Activated CD4-positive, alpha-beta T cell treated with anti-CD3 and anti-CD28 coated beads for 36 hours (primary cell): ENCODE measurements at regions of chr1 and their contacts with region 1.

Region 1: DNA sequence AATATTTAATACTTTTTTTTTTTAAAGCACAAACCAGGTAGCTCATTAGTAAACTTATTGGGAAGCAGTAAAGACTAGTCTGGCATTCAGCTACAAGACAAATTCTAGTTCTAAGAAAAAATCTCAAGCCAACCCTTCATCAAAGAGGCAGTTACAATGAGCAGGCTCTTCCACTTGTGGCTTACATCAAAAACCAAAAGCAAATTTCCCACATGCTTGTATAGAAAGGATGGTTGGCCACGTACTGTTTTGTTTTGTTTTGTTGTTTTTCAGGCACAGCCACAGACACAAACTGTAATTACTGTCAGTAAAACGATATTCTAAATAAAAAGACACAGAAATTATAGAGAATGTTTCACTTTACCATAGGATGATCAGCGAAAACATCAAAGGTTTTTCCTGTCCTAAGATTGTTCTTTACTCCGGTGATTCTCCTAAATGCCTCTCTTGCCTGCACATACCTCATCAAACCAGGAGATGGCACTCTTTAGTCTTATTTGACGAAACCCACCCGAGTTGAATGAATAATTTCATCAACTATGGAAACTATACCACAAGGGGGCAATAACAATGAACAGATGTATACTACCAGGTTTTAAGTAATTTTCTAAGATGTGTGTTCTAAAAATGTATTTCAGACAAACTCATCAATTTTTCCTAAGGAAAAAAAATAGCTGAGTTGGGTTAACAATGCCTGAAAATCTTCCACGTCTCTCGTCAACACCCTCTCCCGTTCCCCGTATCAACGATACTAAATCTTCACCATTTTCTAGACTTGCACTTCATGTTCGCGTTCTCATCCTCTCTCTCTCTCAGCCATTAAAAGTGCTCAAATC is 26.9 kb downstream of the RPL5 start:
- DNase-seq: peak; percentile 58
- ATAC-seq: peak; percentile 86
- H3K4me3 Mint-ChIP-seq: peak overlapping the region; percentile 48
- H3K27ac Mint-ChIP-seq: peak overlapping the region; percentile 48
- H3K4me1 Mint-ChIP-seq: peaks cover 17% of the 10 kb centered on the region
- H3K27me3 Mint-ChIP-seq: no peaks in the 10 kb centered on the region

Region 2: GRCh38 chr1:92877792-92878191 is 19.0 kb after region 1 on chr1:
- CTCF ChIA-PET with region 1: interaction called, 27 read pairs
- POLR2A ChIA-PET with region 1: no interaction called
- intact Hi-C with region 1: no loop called
- DNase-seq: no peak
- ATAC-seq: peak; percentile 60
- H3K4me3 Mint-ChIP-seq: peak overlapping the region; percentile 56
- H3K27ac Mint-ChIP-seq: peak overlapping the region; percentile 83
- H3K4me1 Mint-ChIP-seq: peaks cover 33% of the 10 kb centered on the region
- H3K27me3 Mint-ChIP-seq: no peaks in the 10 kb centered on the region

Region 3: DNA sequence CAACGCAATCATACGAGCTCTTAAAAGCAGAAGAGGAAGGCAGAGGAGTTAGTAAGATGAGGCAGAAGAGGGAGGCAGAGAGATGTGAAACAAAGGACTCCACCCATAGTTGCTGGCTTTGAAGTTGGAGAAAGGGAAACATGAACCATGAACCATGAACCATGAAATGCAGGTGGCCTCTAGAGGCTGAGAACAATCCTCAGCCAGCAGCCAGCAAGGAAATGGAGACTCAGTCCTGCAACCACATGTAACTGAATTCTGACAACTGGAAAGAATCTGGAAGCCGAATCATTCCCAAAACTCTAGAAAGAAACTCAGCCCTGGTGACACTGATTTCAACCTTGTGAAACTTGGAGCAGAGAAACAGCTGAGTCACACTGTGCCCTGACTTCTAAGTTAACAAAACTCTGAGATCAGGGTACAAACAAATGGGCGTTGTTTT is 92.4 kb after region 1 on chr1:
- CTCF ChIA-PET with region 1: interaction called, 156 read pairs
- POLR2A ChIA-PET with region 1: no interaction called
- intact Hi-C with region 1: loop called in 1 of 2 experiments (anchors 2 kb)
- DNase-seq: peak; percentile 37
- ATAC-seq: peak; percentile 77
- H3K4me3 Mint-ChIP-seq: no peak overlapping the region
- H3K27ac Mint-ChIP-seq: no peak overlapping the region
- H3K4me1 Mint-ChIP-seq: peaks cover 42% of the 10 kb centered on the region
- H3K27me3 Mint-ChIP-seq: no peaks in the 10 kb centered on the region

Region 4: DNA sequence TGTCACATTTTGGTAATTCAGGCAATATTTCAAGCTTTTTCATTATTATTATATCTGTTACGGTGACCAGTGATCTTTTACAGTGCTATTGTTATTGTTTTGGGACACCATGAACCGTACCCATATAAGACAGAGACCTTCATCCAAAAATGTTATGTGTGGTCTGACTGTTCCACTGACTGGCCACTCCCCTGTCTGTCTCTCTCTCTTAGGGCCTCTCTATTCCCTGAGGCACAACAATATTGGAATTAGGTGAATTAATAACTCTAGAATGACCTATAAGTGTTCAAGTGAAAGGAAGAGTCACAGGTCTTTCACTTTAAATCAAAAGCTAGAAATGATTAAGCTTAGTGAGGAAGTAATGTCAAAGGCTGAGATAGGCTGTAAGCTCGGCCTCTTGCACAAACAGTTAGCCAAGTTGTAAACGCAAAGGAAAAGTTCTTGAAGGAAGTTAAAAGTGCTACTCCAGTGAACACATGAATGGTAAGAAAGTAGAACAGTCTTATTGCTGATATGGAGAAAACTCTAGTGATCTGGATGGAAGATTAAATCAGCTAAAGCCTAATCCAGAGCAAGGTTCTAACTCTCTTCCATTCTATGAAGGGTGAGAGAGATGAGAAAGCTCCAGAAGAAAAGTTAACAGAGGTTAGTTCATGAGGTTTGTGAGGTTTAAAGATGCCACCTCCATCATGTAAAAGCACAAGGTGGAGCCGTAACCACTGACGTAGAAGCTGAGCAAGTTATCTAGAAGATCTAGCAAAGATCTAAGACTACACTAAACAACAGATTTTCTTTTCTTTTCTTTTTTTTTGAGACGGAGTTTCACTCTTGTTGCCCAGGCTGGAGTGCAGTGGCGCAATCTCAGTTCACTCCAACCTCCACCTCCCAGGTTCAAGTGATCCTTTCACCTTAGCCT is 122.2 kb after region 1 on chr1:
- CTCF ChIA-PET with region 1: interaction called, 19 read pairs
- POLR2A ChIA-PET with region 1: no interaction called
- intact Hi-C with region 1: no loop called
- DNase-seq: peak; percentile 46
- ATAC-seq: peak; percentile 73
- H3K4me3 Mint-ChIP-seq: peak overlapping the region; percentile 47
- H3K27ac Mint-ChIP-seq: peak overlapping the region; percentile 97
- H3K4me1 Mint-ChIP-seq: peaks cover 54% of the 10 kb centered on the region
- H3K27me3 Mint-ChIP-seq: no peaks in the 10 kb centered on the region

Region 5: GRCh38 chr1:93061895-93062792 is 203.4 kb after region 1 on chr1:
- CTCF ChIA-PET with region 1: interaction called, 11 read pairs
- POLR2A ChIA-PET with region 1: no interaction called
- intact Hi-C with region 1: loop called (anchors 2 kb)
- DNase-seq: peak; percentile 63
- ATAC-seq: peak; percentile 89
- H3K4me3 Mint-ChIP-seq: no peak overlapping the region
- H3K27ac Mint-ChIP-seq: no peak overlapping the region
- H3K4me1 Mint-ChIP-seq: no peaks in the 10 kb centered on the region
- H3K27me3 Mint-ChIP-seq: peaks cover 10% of the 10 kb centered on the region

Region 6: DNA sequence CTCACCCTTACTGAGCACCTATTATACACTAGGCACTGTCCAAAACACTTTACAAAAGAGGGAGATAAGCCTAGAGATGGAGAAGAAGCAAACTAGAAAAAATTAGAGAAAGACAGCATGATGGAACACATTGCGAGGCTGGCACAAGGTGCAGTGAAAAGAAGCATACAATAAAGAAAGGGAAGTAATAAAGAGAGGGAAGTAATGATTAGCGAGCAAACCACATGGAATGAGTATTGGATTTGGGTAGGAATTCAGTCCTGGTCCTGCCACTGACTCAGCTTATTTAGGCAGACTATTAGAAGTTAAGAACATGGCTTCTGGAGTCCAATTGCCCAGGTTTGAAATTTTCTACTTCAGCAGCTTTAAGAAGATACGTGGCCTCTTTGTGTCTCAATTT is 556.5 kb after region 1 on chr1:
- CTCF ChIA-PET with region 1: no interaction called
- POLR2A ChIA-PET with region 1: no interaction called
- intact Hi-C with region 1: no loop called
- DNase-seq: no peak
- ATAC-seq: no peak
- H3K4me3 Mint-ChIP-seq: no peak overlapping the region
- H3K27ac Mint-ChIP-seq: no peak overlapping the region
- H3K4me1 Mint-ChIP-seq: no peaks in the 10 kb centered on the region
- H3K27me3 Mint-ChIP-seq: no peaks in the 10 kb centered on the region